ENCODE measurements at regions of chr4 and their contacts with region 1.

Region 1: GRCh38 chr4:77157859-77158486 is 966 bp downstream of the CCNG2 start:
- DNase-seq: peak; percentile 88
- H3K4me3 ChIP-seq: peak overlapping the region; percentile 83 to 100
- H3K27ac ChIP-seq: peak overlapping the region; percentile 96 to 99
- H3K4me1 ChIP-seq: no peaks in the 10 kb centered on the region
- H3K27me3 ChIP-seq: no peaks in the 10 kb centered on the region
- CTCF ChIP-seq: peak in 2 of 4 experiments; percentile 34 to 39
- POLR2A ChIP-seq: peak; percentile 69

Region 2: DNA sequence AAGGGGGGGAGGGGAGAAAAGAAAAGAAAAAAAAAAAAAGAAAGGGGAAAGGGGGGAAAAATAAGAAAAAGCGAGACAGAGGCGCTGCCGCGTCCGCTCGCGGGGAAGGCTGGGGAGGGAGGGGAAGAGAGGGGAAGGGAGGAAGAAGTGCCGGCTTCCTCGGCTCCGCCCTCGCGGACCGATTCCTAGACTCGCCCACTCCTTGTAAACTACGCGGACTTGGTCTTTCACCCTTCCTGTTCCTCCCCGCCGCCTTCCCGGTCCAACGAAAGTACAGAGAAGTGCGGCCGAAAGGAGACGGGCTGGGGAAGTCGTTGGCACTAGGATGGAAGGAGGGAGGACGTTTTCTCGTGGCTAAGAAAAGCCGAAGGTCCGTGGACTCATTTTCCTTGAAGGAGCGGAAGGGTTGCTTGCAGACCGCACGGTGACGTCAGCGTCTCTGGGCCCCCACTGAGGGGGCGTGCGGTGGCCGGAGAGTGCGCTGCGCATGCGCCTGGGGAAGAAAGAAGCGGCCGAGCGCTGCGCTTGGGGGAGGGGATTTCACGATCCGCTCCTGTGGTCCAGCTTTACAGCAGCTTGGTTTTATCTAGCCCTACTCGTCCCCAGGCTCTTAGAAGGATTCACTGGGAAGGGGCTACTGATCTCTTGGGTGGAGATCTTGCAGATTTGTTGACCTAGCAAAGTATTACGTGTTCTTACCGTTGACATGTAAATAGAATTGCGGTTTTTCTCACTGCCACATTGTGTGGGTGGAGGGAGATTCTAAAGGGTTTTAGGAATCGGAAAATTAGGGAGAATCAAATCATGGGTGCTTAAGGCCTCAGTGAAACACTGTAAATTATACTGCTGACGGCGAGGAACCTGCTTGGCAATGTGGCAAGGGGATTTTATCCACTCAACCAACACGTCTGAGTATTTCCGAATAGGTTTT is 81.8 kb before region 1 on chr4 and contains the start of gene CCNI:
- intact Hi-C with region 1: loop called (anchors 1 kb)
- DNase-seq: peak; percentile 94
- H3K4me3 ChIP-seq: peak within 1 kb of the TSS; percentile 98 to 100
- H3K27ac ChIP-seq: peak within 1 kb of the TSS; percentile 100
- H3K4me1 ChIP-seq: no peaks in the 10 kb centered on the region
- H3K27me3 ChIP-seq: no peaks in the 10 kb centered on the region
- CTCF ChIP-seq: no peak
- POLR2A ChIP-seq: peak; percentile 69
- total RNA-seq, gene CCNI: 274 to 367 TPM

Region 3: DNA sequence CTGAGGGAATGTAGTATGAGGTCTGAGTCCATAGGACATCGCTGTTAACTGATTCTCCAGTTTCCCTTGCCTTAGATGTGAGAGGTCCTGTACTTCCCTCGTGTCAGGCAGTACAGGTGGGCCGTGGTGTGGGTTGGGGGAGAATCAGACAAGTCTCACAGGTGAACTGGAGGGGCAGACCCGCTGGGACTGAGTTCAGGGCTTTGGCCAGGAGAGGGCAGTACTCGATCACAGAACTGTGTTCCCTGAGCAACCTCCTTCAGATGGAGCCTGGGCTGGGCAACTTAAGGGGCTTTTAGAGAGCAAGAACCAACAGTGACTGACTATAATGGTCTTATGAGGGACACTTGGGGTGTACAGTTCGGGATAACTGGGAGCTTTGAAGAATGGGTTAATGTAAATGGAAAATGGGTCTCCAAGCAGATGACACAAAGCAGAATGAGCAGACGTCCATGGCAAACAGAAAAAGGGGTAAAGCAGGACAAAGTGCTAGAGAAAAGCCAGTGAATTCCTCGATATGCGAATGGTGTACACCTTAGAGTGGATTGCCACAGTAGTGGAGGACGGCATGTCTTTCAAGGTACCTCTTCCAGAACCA is 82.6 kb after region 1 on chr4:
- intact Hi-C with region 1: no loop called
- DNase-seq: peak; percentile 51
- H3K4me3 ChIP-seq: no peak overlapping the region
- H3K27ac ChIP-seq: no peak overlapping the region
- H3K4me1 ChIP-seq: no peaks in the 10 kb centered on the region
- H3K27me3 ChIP-seq: no peaks in the 10 kb centered on the region
- CTCF ChIP-seq: peak; percentile 13 to 83 (median 74)
- POLR2A ChIP-seq: no peak